HEK293 (cell line): ENCODE measurements at regions of chr1 and their contacts with region 1.

Region 1: GRCh38 chr1:205977402-205978014 is 25.7 kb downstream of the RAB7B start:
- H3K4me3 ChIP-seq: no peak overlapping the region
- H3K27ac ChIP-seq: no peak overlapping the region
- H3K4me1 ChIP-seq: no peaks in the 10 kb centered on the region
- CTCF ChIP-seq: peak; percentile 88

Region 2: DNA sequence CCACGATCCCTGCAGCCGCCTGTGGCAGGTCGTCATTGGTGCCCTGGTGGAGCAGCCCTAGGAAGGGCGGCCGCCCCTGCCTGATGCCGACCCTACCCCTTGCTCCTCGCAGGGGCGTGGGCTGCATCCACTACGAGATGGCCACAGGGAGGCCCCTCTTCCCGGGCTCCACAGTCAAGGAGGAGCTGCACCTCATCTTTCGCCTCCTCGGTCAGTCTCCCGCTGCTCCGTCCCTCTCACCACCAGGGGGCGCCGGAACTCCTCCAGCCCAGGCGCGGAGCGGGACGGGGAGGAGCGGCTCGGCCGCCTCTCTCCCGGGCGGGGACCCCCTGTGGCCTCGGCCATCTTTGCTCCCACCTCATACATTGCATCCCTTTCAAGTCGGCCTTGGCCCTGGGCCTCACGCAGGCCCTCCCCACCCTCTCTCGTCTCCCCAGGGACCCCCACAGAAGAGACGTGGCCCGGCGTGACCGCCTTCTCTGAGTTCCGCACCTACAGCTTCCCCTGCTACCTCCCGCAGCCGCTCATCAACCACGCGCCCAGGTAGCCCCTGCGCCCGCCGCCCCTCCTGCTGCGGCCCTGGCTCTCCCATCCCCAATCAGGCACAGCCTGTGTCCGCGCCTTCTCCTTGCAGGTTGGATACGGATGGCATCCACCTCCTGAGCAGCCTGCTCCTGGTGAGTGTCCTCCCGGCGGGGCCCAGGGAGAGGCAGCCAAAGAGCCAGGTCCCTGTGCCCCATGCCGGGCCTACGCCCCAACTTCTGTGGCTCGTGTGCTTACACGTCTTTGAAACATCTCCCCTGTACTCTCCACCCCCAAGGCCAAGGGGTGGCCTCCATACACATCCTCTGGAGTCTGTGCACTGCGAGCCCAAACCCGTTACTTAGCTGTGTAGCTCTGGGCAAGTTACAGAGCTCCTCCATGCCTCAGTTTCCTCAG is 448.4 kb before region 1 on chr1:
- CTCF ChIA-PET with region 1: interaction called, 10 read pairs
- POLR2A ChIA-PET with region 1: no interaction called
- H3K4me3 ChIP-seq: no peak overlapping the region
- H3K27ac ChIP-seq: no peak overlapping the region
- H3K4me1 ChIP-seq: no peaks in the 10 kb centered on the region
- CTCF ChIP-seq: peak; percentile 97

Region 3: GRCh38 chr1:205783904-205784303 is 193.6 kb before region 1 on chr1:
- CTCF ChIA-PET with region 1: interaction called, 155 read pairs
- POLR2A ChIA-PET with region 1: no interaction called
- H3K4me3 ChIP-seq: no peak overlapping the region
- H3K27ac ChIP-seq: no peak overlapping the region
- H3K4me1 ChIP-seq: 0 out of 2 replicates have a peak, but pooled peaks cover 4% of the 10 kb centered on the region
- CTCF ChIP-seq: no peak

Region 4: DNA sequence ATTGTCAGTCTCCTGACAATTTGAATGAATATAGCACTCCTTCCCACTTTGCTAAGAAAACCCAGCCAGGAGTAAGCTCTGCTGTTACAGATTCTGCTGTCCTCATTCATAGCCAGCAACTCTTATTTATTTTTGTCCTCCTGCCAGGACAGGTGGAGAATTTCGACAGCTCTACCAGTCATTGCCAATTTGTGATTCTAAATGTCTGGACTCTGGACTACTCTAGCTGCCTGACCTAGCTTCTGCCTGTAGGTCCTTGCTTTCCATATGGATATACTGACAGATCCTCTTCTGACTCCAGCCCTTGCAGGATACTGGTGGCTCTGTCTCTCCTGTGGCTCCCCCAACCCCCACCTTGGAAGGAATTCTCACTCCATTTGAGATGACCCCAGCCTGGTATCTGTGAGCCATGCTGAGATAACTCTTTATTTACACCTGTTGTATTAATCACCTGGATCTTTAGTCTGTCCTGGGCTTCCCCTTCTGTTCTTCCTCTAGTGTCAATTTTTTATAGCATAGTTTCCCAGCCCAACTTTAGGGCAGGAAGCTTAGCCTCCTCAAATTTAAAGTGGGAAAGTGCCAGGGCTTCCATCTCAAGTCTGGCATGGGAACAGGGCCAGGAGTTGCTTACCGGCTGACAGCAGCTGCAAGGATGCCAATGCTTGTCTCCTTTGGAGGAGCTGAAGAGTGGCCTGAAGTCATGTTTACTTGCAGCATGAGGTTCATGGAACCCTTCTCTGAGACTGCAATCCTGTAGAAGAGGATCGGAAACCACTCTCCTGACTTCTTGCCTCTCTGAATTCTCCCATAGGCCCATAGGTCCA is 134.3 kb before region 1 on chr1:
- CTCF ChIA-PET with region 1: no interaction called
- POLR2A ChIA-PET with region 1: no interaction called
- H3K4me3 ChIP-seq: no peak overlapping the region
- H3K27ac ChIP-seq: no peak overlapping the region
- H3K4me1 ChIP-seq: no peaks in the 10 kb centered on the region
- CTCF ChIP-seq: no peak

Region 5: GRCh38 chr1:205870236-205870635 is 107.3 kb before region 1 on chr1:
- CTCF ChIA-PET with region 1: no interaction called
- POLR2A ChIA-PET with region 1: no interaction called
- H3K4me3 ChIP-seq: no peak overlapping the region
- H3K27ac ChIP-seq: no peak overlapping the region
- H3K4me1 ChIP-seq: no peaks in the 10 kb centered on the region
- CTCF ChIP-seq: no peak

Region 6: GRCh38 chr1:205907794-205908193 is 69.7 kb before region 1 on chr1:
- CTCF ChIA-PET with region 1: interaction called, 527 read pairs
- POLR2A ChIA-PET with region 1: no interaction called
- H3K4me3 ChIP-seq: no peak overlapping the region
- H3K27ac ChIP-seq: no peak overlapping the region
- H3K4me1 ChIP-seq: no peaks in the 10 kb centered on the region
- CTCF ChIP-seq: no peak

Region 7: GRCh38 chr1:205939690-205940330 is 37.7 kb before region 1 on chr1:
- CTCF ChIA-PET with region 1: interaction called, 18 read pairs
- POLR2A ChIA-PET with region 1: no interaction called
- H3K4me3 ChIP-seq: no peak overlapping the region
- H3K27ac ChIP-seq: no peak overlapping the region; the same call in 1 of the 2 replicates
- H3K4me1 ChIP-seq: peaks cover 8% of the 10 kb centered on the region
- CTCF ChIP-seq: peak; percentile 75; the same call in 1 of the 2 replicates

Region 8: DNA sequence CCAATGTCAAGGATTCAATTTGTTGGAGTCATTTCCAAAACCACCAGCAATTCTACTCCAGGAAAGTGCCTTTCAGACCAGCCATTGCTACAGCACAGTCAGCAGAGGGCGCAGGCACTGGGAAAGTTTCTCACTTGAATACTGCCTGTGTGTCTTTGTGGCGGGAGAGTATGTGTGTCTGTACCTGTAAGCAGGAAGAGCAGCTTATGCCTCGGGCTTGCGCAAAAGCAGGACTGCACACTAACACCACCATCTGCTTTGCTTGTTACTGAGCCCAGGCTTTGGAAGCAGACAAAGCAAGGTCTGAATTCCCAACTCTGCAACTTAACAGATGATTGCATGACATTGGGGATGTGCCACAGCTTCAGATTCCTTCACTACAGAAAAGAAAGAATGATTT is 53.2 kb after region 1 on chr1:
- CTCF ChIA-PET with region 1: interaction called, 15 read pairs
- POLR2A ChIA-PET with region 1: no interaction called
- H3K4me3 ChIP-seq: no peak overlapping the region
- H3K27ac ChIP-seq: no peak overlapping the region
- H3K4me1 ChIP-seq: no peaks in the 10 kb centered on the region
- CTCF ChIP-seq: peak; percentile 82

Region 9: DNA sequence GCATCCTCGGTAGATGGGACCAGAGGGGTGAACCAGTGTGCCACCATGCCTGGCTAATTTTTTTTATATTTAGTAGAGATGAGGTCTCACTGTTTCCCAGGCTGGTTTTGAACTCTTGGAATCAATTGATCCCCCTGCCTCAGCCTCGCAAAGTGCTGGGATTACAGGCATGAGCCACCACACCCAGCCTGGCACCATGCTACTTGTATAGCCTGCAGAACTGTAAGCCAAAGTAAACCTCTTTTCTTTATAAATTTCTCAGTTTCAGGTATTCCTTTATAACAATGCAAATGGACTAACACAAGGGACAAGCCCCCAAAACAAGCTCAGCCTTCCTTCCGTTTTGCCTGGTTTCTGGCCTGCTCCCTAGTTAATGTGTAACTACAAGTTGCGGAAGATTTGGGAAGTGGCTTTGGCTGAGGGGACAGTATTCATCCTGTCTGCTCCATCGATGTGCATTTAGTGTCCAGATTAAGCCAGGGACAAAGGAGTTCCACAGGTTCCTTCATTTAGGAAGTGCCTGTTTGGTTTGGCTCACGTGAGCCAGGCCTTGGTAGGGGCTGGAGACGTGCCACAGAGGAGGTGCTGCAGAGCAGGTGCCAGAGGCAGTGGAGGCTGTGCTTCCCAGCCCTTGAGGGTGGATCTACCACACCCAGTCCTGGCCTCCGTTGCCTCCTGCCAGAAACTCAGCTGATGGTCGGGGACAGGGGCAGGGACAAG is 135.3 kb after region 1 on chr1:
- CTCF ChIA-PET with region 1: interaction called, 151 read pairs
- POLR2A ChIA-PET with region 1: no interaction called
- H3K4me3 ChIP-seq: no peak overlapping the region
- H3K27ac ChIP-seq: no peak overlapping the region
- H3K4me1 ChIP-seq: no peaks in the 10 kb centered on the region
- CTCF ChIP-seq: no peak